ENCODE measurements at regions of chr16 and their contacts with region 1.

Region 1: DNA sequence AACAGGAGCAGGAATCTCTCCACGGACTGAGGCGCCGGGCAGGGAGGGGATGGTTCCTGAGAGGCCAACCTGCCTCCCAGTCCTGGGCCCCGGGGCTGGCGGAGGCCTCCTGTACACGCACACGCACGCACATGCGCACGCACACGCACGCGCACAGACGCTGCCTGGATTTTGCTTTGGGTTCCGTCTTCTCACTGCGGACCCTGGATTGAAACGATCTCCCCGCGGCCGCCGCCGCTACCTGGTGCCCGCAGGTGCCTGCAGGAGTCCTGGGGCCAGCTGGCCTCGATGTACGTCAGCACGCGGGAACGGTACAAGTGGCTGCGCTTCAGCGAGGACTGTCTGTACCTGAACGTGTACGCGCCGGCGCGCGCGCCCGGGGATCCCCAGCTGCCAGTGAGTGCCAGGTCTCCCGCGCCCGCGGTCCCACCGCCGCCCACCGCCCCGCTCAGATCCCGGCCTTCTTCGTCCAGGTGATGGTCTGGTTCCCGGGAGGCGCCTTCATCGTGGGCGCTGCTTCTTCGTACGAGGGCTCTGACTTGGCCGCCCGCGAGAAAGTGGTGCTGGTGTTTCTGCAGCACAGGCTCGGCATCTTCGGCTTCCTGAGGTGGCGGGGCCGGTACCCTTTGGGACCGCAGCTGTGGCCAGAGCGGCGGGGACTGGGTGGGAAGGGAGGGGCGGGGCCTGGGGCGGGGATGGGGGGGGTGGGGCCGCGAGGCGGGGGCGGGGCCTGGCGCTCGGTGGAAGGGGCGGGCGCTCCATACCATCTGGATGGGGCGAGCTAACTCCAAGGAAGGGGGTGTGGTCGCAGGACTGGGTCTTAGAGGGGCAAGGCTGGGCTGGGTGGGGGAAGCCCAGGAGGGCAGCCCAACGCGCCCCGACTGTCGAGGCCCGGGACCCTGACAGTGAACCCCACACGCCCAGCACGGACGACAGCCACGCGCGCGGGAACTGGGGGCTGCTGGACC is 12.3 kb downstream of the CES4A start:
- DNase-seq: peak; percentile 71
- H3K4me3 Mint-ChIP-seq: peak overlapping the region; percentile 81
- H3K27ac Mint-ChIP-seq: peak overlapping the region; percentile 78
- H3K4me1 Mint-ChIP-seq: peaks cover 42% of the 10 kb centered on the region
- H3K27me3 Mint-ChIP-seq: no peaks in the 10 kb centered on the region

Region 2: GRCh38 chr16:66934153-66934838 is 66.4 kb before region 1 on chr16 and contains the start of gene CIAO2B:
- CTCF ChIA-PET with region 1: no interaction called
- POLR2A ChIA-PET with region 1: no interaction called
- DNase-seq: peak; percentile 90
- H3K4me3 Mint-ChIP-seq: peak within 1 kb of the TSS; percentile 98
- H3K27ac Mint-ChIP-seq: peak within 1 kb of the TSS; percentile 94
- H3K4me1 Mint-ChIP-seq: peaks cover 57% of the 10 kb centered on the region
- H3K27me3 Mint-ChIP-seq: no peaks in the 10 kb centered on the region
- total RNA-seq, gene CIAO2B: 116 to 121 TPM

Region 3: GRCh38 chr16:66988197-66988788 is 12.4 kb before region 1 on chr16 and contains the start of gene CES4A:
- CTCF ChIA-PET with region 1: interaction called, 3 read pairs
- POLR2A ChIA-PET with region 1: interaction called, 15 read pairs
- DNase-seq: no peak
- H3K4me3 Mint-ChIP-seq: no peak within 1 kb of the TSS
- H3K27ac Mint-ChIP-seq: peak within 1 kb of the TSS; percentile 98
- H3K4me1 Mint-ChIP-seq: peaks cover 47% of the 10 kb centered on the region
- H3K27me3 Mint-ChIP-seq: no peaks in the 10 kb centered on the region
- total RNA-seq, gene CES4A: 37.8 to 39.3 TPM

Region 4: DNA sequence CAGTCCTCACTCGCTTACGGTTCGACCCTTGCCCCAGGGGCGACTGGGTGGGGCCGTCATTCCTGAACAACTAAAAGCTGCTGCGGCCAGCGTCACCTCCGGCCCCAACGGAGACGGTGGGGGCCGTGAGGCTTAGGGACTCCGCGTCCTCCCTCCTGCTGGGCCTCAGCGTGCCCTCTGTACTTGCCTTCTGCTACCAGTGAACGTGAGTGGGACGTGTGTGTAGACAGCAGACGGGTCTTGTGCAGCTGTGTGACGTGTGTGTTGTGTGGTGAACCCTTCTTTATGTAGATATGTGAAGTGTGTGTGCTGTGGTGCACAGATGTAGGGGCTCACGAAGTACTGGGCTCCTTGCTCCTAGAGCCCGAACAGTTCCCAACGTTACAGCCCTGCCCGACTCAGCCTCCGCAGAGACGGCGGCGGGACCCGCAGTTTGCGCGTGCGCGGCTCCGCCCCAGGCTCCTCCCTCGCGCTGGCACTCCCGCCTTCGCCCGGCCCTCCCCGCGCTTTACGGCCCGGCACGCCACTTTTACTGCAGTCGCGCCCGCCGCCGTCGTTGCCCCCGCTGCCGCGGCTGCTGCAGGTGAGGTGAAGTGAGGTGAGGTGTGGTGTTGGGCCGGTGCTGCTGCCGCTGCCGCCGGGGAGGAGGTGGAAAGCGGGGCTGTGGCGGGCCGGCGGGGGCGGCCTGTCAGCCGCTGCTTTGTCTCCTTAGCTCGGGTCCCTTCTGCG is 108.9 kb after region 1 on chr16 and contains the start of gene PHAF1:
- CTCF ChIA-PET with region 1: no interaction called
- POLR2A ChIA-PET with region 1: no interaction called
- DNase-seq: peak; percentile 95
- H3K4me3 Mint-ChIP-seq: peak within 1 kb of the TSS; percentile 95
- H3K27ac Mint-ChIP-seq: peak within 1 kb of the TSS; percentile 68
- H3K4me1 Mint-ChIP-seq: peaks cover 29% of the 10 kb centered on the region
- H3K27me3 Mint-ChIP-seq: no peaks in the 10 kb centered on the region
- total RNA-seq, gene PHAF1: 12.4 to 13.3 TPM